Activated naive CD4-positive, alpha-beta T cell treated with anti-CD3 and anti-CD28 coated beads for 36 hours (primary cell): ENCODE measurements at regions of chr2 and their contacts with region 1.

Region 1: DNA sequence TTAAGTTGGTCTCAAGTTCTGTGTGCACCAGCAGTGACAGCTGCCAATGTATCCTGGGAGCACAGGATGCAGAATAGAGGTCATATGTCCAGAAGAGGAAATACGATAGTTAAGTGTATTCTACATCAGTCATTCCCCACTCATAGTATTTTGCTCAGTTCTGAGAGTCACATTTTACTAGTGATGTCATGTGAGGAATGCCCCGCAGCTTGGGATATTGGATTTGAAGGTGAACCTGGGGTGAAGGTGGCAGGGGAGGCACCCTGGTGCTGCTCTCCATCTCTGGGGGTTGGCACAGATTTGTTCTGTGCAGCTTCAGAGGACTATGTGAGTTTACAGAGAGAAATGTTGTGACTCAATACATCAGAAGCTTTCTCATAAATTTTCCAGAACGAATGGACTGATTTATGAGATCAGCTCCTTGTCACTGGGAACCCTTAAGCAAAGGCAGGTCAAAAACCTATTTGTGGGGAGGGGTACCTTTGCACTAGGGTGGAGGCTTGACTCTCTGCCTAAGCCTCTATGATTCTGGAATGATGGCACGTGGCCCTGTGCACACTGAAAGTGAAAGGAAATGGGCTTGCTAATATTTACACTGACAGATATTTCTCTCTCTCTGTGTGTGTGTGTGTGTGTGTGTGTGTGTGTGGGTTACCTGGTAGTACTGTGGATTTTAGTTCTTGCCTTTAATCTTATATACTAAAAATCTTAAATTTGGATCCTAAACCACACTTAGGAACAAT is 95.9 kb downstream of the NEB start:
- DNase-seq: peak; percentile 55
- H3K4me3 Mint-ChIP-seq: peak overlapping the region; percentile 50
- H3K27ac Mint-ChIP-seq: peak overlapping the region; percentile 82
- H3K4me1 Mint-ChIP-seq: peaks cover 30% of the 10 kb centered on the region
- H3K27me3 Mint-ChIP-seq: no peaks in the 10 kb centered on the region

Region 2: GRCh38 chr2:151289369-151290088 is 348.8 kb before region 1 on chr2 and contains the start of gene NMI:
- CTCF ChIA-PET with region 1: no interaction called
- intact Hi-C with region 1: loop called (anchors 1 kb)
- DNase-seq: peak; percentile 81
- H3K4me3 Mint-ChIP-seq: peak within 1 kb of the TSS; percentile 89
- H3K27ac Mint-ChIP-seq: peak within 1 kb of the TSS; percentile 94
- H3K4me1 Mint-ChIP-seq: peaks cover 41% of the 10 kb centered on the region
- H3K27me3 Mint-ChIP-seq: no peaks in the 10 kb centered on the region
- total RNA-seq, gene NMI: 18.6 to 20.0 TPM

Region 3: DNA sequence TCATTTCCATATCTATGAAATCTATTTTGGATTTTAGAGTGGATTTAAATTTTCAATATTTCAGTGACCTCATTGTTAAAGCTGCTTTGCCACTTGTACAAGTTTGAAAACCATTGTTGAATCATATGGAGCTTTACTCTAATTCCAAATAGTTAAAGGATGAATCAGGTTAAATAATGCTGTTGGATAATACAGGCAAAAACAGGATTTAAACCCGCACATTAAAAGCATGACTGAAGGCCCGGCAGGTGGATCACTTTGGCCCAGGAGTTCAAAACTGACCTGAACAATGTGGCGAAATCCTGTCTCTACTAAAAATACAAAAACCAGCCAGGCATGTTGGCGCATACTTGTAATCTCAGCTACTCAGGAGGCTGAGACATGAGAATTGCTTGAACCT is 160.4 kb before region 1 on chr2:
- CTCF ChIA-PET with region 1: no interaction called
- intact Hi-C with region 1: loop called (anchors 5 kb)
- DNase-seq: no peak
- H3K4me3 Mint-ChIP-seq: no peak overlapping the region
- H3K27ac Mint-ChIP-seq: no peak overlapping the region
- H3K4me1 Mint-ChIP-seq: peaks cover 18% of the 10 kb centered on the region
- H3K27me3 Mint-ChIP-seq: no peaks in the 10 kb centered on the region

Region 4: GRCh38 chr2:151808258-151809072 is 170.1 kb after region 1 on chr2:
- CTCF ChIA-PET with region 1: no interaction called
- intact Hi-C with region 1: loop called (anchors 5 kb)
- DNase-seq: no peak
- H3K4me3 Mint-ChIP-seq: no peak overlapping the region
- H3K27ac Mint-ChIP-seq: no peak overlapping the region
- H3K4me1 Mint-ChIP-seq: peaks cover 2% of the 10 kb centered on the region
- H3K27me3 Mint-ChIP-seq: no peaks in the 10 kb centered on the region

Region 5: DNA sequence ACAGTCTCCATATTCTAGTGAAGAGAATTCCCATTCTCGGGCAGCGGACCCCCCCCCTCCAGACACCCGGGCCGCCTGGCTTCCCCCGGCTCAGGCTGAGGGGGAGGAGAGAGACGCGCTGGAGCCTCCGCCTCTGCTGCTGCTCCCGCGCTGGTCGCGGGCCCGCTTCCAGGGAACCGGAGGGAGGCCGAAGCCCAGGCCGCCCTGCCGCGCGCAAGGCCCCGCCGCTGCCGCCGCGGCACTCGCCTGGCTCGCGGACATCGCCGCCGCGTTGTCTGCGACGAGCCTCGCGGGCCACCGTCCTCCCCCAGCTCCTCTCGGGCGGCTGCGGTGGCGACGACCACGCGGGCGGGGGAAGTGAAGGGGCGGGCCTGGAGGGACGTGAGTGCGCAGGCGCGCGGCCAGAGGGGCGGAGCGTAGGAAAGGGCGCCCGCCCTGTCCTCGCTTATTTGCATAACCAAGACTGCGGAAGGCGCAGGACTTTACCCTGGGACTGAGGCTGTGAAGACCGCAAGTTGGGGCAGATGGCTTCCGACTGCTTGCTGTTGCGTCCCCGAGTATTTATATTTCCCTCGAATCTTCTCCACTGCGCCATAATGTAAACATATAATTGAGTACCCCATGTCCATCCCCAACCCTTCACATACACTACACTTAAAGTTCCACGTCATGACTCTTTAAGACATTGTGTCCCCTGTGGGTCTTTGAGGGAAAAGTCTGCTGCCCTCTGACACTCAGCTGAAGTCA is 190.0 kb after region 1 on chr2 and contains the start of gene ARL5A:
- CTCF ChIA-PET with region 1: interaction called, 4 read pairs
- intact Hi-C with region 1: loop called (anchors 1 kb)
- DNase-seq: peak; percentile 94
- H3K4me3 Mint-ChIP-seq: peak within 1 kb of the TSS; percentile 95
- H3K27ac Mint-ChIP-seq: peak within 1 kb of the TSS; percentile 82
- H3K4me1 Mint-ChIP-seq: peaks cover 39% of the 10 kb centered on the region
- H3K27me3 Mint-ChIP-seq: no peaks in the 10 kb centered on the region
- total RNA-seq, gene ARL5A: 40.6 to 43.7 TPM